Activated B cell treated with CpG ODN at 0.5 μM for 24 hours (primary cell): ENCODE measurements at regions of chr5 and their contacts with region 1.

Region 1: DNA sequence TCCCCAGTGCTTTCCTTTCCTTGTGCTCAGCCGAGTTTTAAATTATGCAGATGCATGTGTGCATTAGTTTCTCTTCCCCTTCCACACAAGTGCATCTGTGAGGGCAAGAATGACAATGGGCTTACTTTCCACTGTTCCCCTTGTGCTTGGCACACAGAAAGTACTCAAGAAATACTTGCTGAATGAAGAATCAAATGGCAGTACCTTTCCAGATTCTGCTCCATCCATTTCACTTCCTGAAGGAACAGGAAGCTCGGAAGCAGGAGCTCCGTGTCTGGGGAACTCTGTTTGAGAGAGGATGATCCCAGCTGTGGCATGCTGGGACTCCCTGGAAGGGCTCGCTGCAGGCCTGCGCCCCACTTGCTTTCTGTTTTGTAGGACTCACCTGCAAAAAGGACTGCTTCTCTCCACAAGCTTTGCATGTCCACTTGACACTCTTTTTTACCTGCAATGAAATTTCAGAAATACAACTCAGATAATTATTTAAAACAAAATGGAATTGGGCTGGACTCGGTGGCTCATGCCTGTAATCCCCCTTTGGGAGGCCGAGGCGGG is 5.5 kb downstream of the MRNIP start:
- DNase-seq: no peak
- ATAC-seq: peak; percentile 93
- H3K4me3 Mint-ChIP-seq: peak overlapping the region; percentile 17
- H3K27ac Mint-ChIP-seq: peak overlapping the region; percentile 80
- H3K4me1 Mint-ChIP-seq: peaks cover 44% of the 10 kb centered on the region
- H3K27me3 Mint-ChIP-seq: no peaks in the 10 kb centered on the region
- CTCF ChIP-seq: no peak

Region 2: DNA sequence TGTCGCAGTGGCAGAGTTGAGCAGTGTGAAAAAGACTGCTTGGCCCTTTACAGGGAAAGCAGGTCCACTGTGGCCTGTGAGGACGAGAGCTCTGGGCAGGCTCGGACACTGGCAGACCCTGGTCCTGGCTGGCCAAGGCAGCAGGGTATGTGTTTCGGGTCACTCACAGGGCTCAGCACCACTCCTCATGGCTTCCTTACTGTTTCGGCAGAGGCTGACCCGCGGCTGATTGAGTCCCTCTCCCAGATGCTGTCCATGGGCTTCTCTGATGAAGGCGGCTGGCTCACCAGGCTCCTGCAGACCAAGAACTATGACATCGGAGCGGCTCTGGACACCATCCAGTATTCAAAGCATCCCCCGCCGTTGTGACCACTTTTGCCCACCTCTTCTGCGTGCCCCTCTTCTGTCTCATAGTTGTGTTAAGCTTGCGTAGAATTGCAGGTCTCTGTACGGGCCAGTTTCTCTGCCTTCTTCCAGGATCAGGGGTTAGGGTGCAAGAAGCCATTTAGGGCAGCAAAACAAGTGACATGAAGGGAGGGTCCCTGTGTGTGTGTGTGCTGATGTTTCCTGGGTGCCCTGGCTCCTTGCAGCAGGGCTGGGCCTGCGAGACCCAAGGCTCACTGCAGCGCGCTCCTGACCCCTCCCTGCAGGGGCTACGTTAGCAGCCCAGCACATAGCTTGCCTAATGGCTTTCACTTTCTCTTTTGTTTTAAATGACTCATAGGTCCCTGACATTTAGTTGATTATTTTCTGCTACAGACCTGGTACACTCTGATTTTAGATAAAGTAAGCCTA is 16.6 kb before region 1 on chr5:
- CTCF ChIA-PET with region 1: interaction called, 3 read pairs
- POLR2A ChIA-PET with region 1: interaction called, 8 read pairs
- intact Hi-C with region 1: loop called (anchors 1 kb)
- DNase-seq: no peak
- ATAC-seq: peak; percentile 92
- H3K4me3 Mint-ChIP-seq: no peak overlapping the region
- H3K27ac Mint-ChIP-seq: peak overlapping the region; percentile 63
- H3K4me1 Mint-ChIP-seq: peaks cover 15% of the 10 kb centered on the region
- H3K27me3 Mint-ChIP-seq: no peaks in the 10 kb centered on the region
- CTCF ChIP-seq: no peak